ENCODE measurements at regions of chr17 and their contacts with region 1.

Region 1: GRCh38 chr17:66944351-66945139 is 20.0 kb upstream of the CACNG4 start:
- DNase-seq: no peak
- ATAC-seq: no peak

Region 2: GRCh38 chr17:67035131-67036083 is 90.9 kb after region 1 on chr17:
- intact Hi-C with region 1: loop called (anchors 10 kb)
- DNase-seq: peak; percentile 10
- ATAC-seq: no peak